ENCODE measurements at regions of chr7 and their contacts with region 1.

Region 1: DNA sequence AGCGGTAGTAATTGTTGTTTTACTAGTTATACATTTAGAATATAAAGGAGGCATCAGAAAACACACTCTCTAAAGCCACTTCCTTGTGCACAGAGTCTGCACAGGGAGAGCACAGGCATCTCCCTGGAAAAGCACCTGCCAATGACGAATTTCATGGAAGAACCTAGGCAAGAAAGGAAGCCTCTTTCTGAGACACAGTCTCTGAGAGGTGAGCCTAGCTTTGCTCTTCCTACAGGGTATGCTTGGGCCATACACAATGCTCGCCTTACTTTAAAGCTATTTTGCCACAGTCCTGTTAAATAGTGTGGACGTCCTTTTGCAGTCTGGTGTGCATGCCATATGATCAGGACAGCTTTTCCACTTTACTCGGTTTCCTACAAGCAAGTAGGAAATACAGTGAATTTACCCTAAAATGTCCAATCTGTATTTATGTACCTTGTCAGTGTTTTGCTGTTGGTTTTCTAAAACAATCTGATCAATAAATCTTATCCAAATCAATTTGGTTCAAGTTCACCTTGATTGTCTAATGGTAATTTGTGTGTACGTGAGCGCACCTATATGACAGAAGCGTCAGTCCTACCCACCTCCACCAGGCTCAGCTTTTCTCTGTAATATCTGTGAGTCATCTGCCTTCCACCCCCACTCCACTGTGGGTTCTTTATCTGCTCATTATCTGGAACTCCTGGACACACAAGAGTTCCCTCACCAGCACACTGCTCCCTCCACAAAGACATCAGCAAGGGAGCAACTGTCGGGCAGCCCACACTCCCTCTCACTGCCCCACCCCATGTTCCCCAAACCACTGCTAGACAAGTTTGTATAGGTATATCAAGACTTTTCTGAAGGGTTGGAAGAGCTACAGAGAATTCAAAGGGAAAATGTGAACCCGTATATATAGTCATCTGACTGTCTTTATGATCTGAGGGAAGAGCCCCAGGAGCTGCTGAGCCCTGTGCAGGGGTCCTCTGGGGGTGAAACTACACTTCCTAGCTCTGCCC is 65.2 kb downstream of the KLHDC10 start:
- DNase-seq: peak; percentile 92 to 98 (median 95)
- ATAC-seq: peak; percentile 87
- H3K4me3 ChIP-seq: no peak overlapping the region
- H3K27ac ChIP-seq: peak overlapping the region; percentile 89
- H3K4me1 ChIP-seq: peaks cover 38 to 73% of the 10 kb centered on the region in 2 experiments
- H3K27me3 ChIP-seq: no peaks in the 10 kb centered on the region
- CTCF ChIP-seq: 0 out of 6 replicates have a peak, but pooled peaks of 1 of the 3 experiments have one; percentile 5
- EP300 ChIP-seq: peak; percentile 98
- POLR2A ChIP-seq: no peak; the same call in 1 of the 2 replicates
- RAD21 ChIP-seq: peak; percentile 20 to 50; a peak in 3 of 4 replicates

Region 2: DNA sequence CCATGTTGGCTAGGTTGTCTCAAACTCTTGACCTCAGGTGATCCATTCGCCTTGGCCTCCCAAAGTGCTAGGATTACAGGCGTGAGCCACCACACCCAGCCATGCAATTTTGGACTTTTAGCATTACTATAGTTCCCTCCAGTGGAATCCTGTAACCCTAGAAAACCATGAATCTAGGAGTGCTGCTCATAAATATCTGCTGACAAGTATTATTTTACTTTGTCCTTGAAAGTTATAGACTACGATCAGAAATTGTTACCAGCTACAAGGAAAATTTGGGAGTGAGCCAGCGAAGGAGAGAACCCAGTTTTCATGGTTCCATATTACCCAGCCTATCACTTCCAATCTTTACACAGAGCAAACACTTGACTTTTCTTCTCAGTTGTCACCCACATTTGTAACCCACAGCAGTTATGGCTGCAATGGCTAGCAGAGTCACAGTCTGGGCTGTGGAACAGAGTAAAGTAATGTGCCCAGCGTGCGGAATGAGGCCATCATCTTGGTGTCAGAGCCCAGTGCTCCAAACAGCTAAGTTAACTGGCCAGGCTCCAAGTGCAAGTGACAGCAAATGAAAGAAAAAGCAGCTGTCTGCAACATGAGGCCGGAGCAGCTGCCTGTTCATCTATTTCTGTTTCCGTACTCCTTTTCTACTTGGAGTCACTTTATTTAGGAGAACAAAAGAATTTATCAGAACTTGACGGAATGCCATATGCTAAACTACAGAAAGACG is 114.2 kb before region 1 on chr7:
- CTCF ChIA-PET with region 1: no interaction called
- POLR2A ChIA-PET with region 1: no interaction called
- in situ Hi-C with region 1: no loop called
- intact Hi-C with region 1: no loop called
- DNase-seq: no peak
- ATAC-seq: no peak
- H3K4me3 ChIP-seq: no peak overlapping the region
- H3K27ac ChIP-seq: no peak overlapping the region
- H3K4me1 ChIP-seq: peaks cover 6 to 18% of the 10 kb centered on the region in 2 experiments
- H3K27me3 ChIP-seq: no peaks in the 10 kb centered on the region
- CTCF ChIP-seq: no peak
- EP300 ChIP-seq: no peak
- POLR2A ChIP-seq: no peak
- RAD21 ChIP-seq: no peak

Region 3: GRCh38 chr7:130118294-130118693 is 17.2 kb before region 1 on chr7:
- CTCF ChIA-PET with region 1: no interaction called
- POLR2A ChIA-PET with region 1: interaction called, 48 read pairs
- in situ Hi-C with region 1: no loop called
- intact Hi-C with region 1: no loop called
- DNase-seq: no peak
- ATAC-seq: no peak
- H3K4me3 ChIP-seq: no peak overlapping the region
- H3K27ac ChIP-seq: no peak overlapping the region
- H3K4me1 ChIP-seq: no peaks in the 10 kb centered on the region
- H3K27me3 ChIP-seq: no peaks in the 10 kb centered on the region
- CTCF ChIP-seq: no peak
- EP300 ChIP-seq: no peak
- POLR2A ChIP-seq: no peak
- RAD21 ChIP-seq: no peak

Measured in K562 (cell line).